ENCODE measurements at regions of chr1 and their contacts with region 1.

Region 1: DNA sequence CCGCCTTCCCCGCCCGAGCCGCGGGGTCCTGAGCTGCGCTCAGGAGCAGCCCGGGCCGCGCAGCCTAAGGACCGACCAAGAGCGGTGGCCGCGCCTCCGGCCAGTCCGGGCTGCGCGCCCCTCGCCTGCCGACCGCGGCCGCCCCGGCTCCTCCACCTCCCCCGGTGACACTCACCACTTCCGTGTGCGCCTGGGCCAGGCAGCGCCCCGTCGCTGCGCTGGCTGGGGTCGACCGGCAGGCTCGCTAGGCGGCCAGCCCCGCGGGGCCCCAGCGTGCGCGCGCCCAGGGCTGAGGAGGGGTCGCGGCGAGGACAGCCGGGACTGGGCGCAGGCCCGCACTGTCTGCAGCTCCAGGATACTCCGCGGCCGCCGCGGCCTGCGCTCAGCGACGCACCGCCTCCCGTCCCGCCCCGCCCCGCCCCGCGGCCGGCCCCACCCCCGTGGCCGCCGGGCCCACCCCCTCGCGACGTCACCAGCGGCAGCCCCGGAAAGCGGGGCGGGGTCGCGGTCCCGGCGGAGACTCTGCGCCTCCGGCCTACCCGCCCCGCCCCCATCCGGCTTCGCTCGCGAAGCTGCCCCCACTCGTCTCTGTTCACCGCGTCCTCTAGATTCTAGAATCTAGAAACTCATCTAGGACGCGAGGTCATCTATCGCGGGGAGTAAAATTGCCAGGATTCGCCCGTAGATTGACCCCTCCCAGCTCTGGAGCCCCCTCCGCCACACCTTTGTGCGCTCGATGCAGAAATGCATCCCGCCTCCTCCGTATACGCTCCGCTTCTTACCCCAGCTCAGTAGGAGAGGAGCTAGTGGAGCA is at the start of gene JAK1:
- DNase-seq: peak; percentile 54
- ATAC-seq: peak; percentile 89
- H3K4me3 ChIP-seq: peak within 1 kb of the TSS; percentile 86 to 100 (median 95)
- H3K27ac ChIP-seq: peak within 1 kb of the TSS; percentile 78
- H3K4me1 ChIP-seq: peaks cover 53% of the 10 kb centered on the region
- H3K27me3 ChIP-seq: peaks cover 0 to 3% of the 10 kb centered on the region in 2 experiments; a peak in 2 of 5 replicates
- CTCF ChIP-seq: no peak; the same call in 1 of the 2 replicates
- EP300 ChIP-seq: no peak
- POLR2A ChIP-seq: peak; percentile 79 to 94
- RAD21 ChIP-seq: peak; percentile 79
- total RNA-seq, gene JAK1: 42.4 and 56.1 TPM in 2 replicates

Region 2: GRCh38 chr1:64834734-64835133 is 131.6 kb before region 1 on chr1:
- CTCF ChIA-PET with region 1: no interaction called
- POLR2A ChIA-PET with region 1: no interaction called
- in situ Hi-C with region 1: no loop called
- intact Hi-C with region 1: no loop called
- DNase-seq: no peak
- ATAC-seq: no peak
- H3K4me3 ChIP-seq: no peak overlapping the region
- H3K27ac ChIP-seq: no peak overlapping the region
- H3K4me1 ChIP-seq: no peaks in the 10 kb centered on the region
- H3K27me3 ChIP-seq: no peaks in the 10 kb centered on the region
- CTCF ChIP-seq: no peak
- EP300 ChIP-seq: no peak
- POLR2A ChIP-seq: no peak
- RAD21 ChIP-seq: no peak

Region 3: DNA sequence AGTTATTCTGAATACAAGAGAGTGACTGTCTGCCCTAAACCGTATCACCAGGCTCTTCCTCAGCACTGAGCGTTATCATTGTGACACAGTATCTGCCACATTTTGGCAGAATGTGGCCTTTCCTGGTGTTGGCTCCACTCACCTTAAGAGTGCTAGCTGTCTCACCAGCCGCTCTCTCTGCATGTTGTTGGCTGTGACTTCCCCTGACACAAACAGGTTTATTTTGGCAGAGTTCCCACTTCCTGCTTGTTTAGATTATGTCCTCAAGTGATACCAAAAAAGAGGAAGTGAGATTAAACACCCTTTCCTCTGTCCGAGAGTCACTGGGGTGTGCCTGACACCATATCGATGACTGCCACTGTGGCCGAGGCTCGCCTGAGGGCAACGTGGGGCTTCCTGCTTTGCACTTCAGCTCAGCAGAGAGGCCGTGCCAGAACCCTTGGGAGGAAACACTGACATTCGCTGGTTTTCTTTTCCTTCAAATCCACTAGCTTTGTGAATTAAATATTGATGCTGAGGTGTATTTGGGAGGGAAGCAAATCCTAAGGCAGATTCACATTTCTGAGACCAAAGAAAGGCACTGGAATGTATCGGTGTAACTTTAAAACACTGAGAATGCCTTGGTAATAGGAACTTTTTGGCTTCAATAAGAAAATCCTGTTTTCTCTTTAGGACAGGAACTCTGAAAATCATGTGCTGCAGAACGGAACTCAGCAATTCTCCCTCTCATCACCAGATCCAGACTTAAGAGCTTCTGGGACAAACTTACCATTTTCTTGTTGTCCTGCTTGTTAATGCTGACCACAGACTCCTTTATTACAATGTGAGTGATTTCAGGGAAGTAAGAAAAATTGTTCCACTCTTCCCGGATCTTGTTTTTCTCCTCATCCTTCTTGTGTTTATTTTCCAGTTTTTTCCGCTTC is 102.1 kb before region 1 on chr1:
- CTCF ChIA-PET with region 1: interaction called, 3 read pairs
- POLR2A ChIA-PET with region 1: no interaction called
- in situ Hi-C with region 1: no loop called
- intact Hi-C with region 1: loop called (anchors 5 kb)
- DNase-seq: no peak
- ATAC-seq: no peak; the same call in 2 of the 3 replicates
- H3K4me3 ChIP-seq: no peak overlapping the region
- H3K27ac ChIP-seq: no peak overlapping the region
- H3K4me1 ChIP-seq: 0 out of 2 replicates have a peak, but pooled peaks cover 4% of the 10 kb centered on the region
- H3K27me3 ChIP-seq: no peaks in the 10 kb centered on the region
- CTCF ChIP-seq: no peak
- EP300 ChIP-seq: no peak
- POLR2A ChIP-seq: no peak
- RAD21 ChIP-seq: no peak

Region 4: GRCh38 chr1:64898107-64898845 is 68.1 kb before region 1 on chr1:
- CTCF ChIA-PET with region 1: no interaction called
- POLR2A ChIA-PET with region 1: interaction called, 7 read pairs
- in situ Hi-C with region 1: loop called (anchors 10 kb)
- intact Hi-C with region 1: loop called (anchors 5 kb)
- DNase-seq: peak; percentile 91
- ATAC-seq: peak; percentile 99
- H3K4me3 ChIP-seq: no peak overlapping the region; a peak in 2 of 6 replicates
- H3K27ac ChIP-seq: peak overlapping the region; percentile 55
- H3K4me1 ChIP-seq: peaks cover 48% of the 10 kb centered on the region
- H3K27me3 ChIP-seq: no peaks in the 10 kb centered on the region
- CTCF ChIP-seq: no peak
- EP300 ChIP-seq: peak; percentile 36 to 64; a peak in 2 of 4 replicates
- POLR2A ChIP-seq: no peak
- RAD21 ChIP-seq: no peak

Region 5: DNA sequence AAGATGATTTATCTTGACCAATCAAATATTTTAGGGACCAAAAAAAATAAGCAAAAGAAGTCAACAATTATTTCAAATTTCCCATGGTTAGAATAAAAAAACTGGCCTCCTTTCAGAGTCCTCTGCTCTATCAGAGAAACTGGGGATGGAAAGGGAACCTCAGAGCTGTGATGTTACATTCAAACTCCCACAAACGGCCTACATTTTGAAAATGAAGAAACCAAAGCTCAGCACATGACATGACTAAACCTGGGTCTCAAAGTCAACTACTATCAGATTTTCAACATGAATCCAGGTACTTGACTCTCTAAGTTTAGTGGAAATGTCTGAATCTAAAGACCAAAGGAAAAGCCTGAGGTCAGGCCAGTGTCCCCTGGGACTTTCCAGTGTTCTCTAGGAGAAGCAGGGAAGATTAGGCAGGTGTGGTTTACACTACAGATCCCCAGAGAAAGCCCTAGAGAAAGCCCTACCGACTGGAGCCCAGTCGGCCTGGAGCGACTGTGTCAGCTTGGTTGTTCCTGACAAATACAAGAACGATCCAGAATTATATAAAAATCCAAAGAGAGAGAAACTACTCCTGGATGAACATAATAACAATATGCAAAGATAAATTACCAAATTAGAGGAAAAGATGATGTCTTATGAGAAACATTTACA is 24.8 kb before region 1 on chr1:
- CTCF ChIA-PET with region 1: no interaction called
- POLR2A ChIA-PET with region 1: no interaction called
- in situ Hi-C with region 1: no loop called
- intact Hi-C with region 1: no loop called
- DNase-seq: no peak
- ATAC-seq: no peak
- H3K4me3 ChIP-seq: no peak overlapping the region
- H3K27ac ChIP-seq: no peak overlapping the region
- H3K4me1 ChIP-seq: peaks cover 12% of the 10 kb centered on the region
- H3K27me3 ChIP-seq: no peaks in the 10 kb centered on the region
- CTCF ChIP-seq: no peak
- EP300 ChIP-seq: no peak
- POLR2A ChIP-seq: no peak
- RAD21 ChIP-seq: no peak

Region 6: GRCh38 chr1:64980745-64981600 is 14.6 kb after region 1 on chr1:
- CTCF ChIA-PET with region 1: no interaction called
- POLR2A ChIA-PET with region 1: interaction called, 9 read pairs
- in situ Hi-C with region 1: no loop called
- intact Hi-C with region 1: loop called (anchors 2 kb)
- DNase-seq: peak; percentile 70
- ATAC-seq: peak; percentile 26; the same call in 2 of the 3 replicates
- H3K4me3 ChIP-seq: peak overlapping the region; percentile 35 to 42 (median 36); a peak in 4 of 6 replicates
- H3K27ac ChIP-seq: peak overlapping the region; percentile 49
- H3K4me1 ChIP-seq: peaks cover 41% of the 10 kb centered on the region
- H3K27me3 ChIP-seq: no peaks in the 10 kb centered on the region
- CTCF ChIP-seq: no peak
- EP300 ChIP-seq: no peak
- POLR2A ChIP-seq: no peak
- RAD21 ChIP-seq: no peak

Region 7: GRCh38 chr1:65020774-65021173 is 54.4 kb after region 1 on chr1:
- CTCF ChIA-PET with region 1: no interaction called
- POLR2A ChIA-PET with region 1: interaction called, 4 read pairs
- in situ Hi-C with region 1: no loop called
- intact Hi-C with region 1: loop called (anchors 2 kb)
- DNase-seq: peak; percentile 30
- ATAC-seq: peak; percentile 98
- H3K4me3 ChIP-seq: no peak overlapping the region
- H3K27ac ChIP-seq: no peak overlapping the region
- H3K4me1 ChIP-seq: no peaks in the 10 kb centered on the region
- H3K27me3 ChIP-seq: no peaks in the 10 kb centered on the region
- CTCF ChIP-seq: peak; percentile 59
- EP300 ChIP-seq: no peak
- POLR2A ChIP-seq: no peak
- RAD21 ChIP-seq: no peak; the same call in 1 of the 2 replicates